T-cell (primary cell): ENCODE measurements at regions of chr2 and their contacts with region 1.

Region 1: DNA sequence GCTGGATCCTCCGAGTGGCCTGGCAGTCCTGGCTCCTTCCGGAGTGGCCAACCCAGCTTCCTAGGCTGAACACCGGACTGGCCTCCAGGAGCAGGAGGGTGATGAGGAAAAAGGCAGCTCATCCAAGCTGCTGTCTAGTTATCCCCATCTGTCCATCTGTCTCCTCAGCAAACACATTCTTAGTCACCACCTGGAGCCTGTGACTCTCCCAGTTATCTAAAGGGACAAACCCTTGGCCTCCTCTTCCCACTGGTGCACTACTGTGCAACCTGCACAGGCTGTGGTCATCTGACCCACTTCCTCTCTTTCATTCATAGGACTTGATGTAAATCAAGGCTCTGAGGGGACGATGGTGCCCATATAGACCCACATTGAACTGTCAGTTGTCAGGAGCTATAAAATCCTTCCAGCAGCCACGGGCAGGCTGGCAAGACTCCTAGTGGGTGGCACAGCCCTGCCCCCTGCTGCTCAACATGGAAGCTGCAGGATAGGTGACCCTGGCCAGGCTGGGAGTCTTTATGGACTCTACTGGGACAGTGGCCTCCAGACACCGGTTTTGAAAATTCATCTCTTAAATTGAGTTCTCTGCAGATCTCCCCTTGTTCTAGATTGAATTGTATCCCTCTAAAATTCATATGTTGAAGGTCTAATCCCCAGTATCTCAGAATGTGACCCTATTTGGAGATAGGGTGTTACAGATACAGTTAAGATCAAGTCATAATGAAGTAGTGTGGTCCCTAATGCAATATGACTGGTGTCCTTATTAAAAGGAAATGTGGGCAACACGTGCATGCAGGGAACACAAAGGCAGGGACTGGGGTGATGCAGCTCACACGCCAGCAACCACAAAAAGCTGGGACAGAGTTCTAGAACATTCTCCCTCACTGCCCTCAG is 29.3 kb upstream of the DUSP2 start:
- DNase-seq: peak; percentile 59 to 89 (median 80)
- ATAC-seq: peak; percentile 94 to 98 (median 97)
- H3K4me3 ChIP-seq: no peak overlapping the region
- H3K4me3 Mint-ChIP-seq: no peak overlapping the region
- H3K27ac ChIP-seq: no peak overlapping the region
- H3K27ac Mint-ChIP-seq: peak overlapping the region; percentile 65 to 73
- H3K4me1 ChIP-seq: peaks cover 3 to 8% of the 10 kb centered on the region in 2 experiments
- H3K4me1 Mint-ChIP-seq: peaks cover 6 to 11% (median 9%) of the 10 kb centered on the region in 3 donors
- H3K27me3 ChIP-seq: peaks cover 0 to 3% of the 10 kb centered on the region in 2 experiments
- H3K27me3 Mint-ChIP-seq: no peaks in the 10 kb centered on the region

Region 2: DNA sequence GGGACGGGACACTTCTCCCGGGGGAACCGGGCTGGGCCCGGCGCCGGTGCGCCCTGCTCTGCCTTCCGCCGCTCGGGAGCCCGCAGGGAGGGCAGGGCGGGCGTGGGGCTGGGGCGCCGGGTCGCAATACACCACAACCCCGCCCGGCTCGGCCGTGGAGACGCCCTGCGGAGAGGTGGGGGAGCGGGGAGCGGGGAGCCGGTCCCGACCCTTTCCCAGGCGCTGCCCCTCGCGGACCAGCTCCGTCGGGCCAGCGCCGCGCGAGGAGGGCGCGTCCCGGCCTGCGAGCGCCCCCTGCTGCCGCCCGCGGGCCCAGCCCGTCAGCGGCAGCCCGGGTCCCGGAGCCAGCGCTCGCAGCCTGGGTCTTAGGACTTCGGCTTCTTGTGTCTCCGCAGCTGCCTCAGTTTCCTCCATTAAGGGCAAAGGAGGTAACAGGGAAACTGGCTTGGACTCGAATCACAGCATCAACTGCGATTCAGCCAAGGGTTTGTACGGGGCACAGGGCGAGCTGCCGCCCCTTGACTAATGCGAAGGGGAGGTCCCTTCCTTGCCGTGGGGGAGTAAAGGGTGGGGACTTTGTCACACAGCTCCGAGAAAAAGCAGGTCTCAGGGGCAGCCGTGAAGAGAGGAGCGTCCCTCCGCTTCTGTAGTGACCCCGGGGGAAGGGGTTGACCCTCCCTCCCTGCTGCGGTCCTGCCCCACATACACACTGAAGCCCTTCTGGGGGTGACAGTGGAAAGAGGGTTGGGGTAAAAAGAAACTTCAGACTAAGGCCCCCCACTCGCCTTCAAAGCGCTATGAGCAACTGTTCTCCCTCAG is 57.4 kb before region 1 on chr2:
- CTCF ChIA-PET with region 1: interaction called, 3 to 11 read pairs
- POLR2A ChIA-PET with region 1: no interaction called
- DNase-seq: peak in 33 of 35 experiments; percentile 19 to 83 (median 46)
- ATAC-seq: peak; percentile 77 to 85 (median 82)
- H3K4me3 ChIP-seq: peak overlapping the region; percentile 15 to 49
- H3K4me3 Mint-ChIP-seq: peak overlapping the region; percentile 44 to 75 (median 57)
- H3K27ac ChIP-seq: no peak overlapping the region
- H3K27ac Mint-ChIP-seq: no peak overlapping the region
- H3K4me1 ChIP-seq: peaks cover 3 to 15% of the 10 kb centered on the region in 2 experiments
- H3K4me1 Mint-ChIP-seq: peaks cover 6 to 23% (median 16%) of the 10 kb centered on the region in 3 donors
- H3K27me3 ChIP-seq: peaks cover 0 to 59% of the 10 kb centered on the region in 2 experiments
- H3K27me3 Mint-ChIP-seq: peaks cover 19 to 39% of the 10 kb centered on the region in 2 donors

Region 3: DNA sequence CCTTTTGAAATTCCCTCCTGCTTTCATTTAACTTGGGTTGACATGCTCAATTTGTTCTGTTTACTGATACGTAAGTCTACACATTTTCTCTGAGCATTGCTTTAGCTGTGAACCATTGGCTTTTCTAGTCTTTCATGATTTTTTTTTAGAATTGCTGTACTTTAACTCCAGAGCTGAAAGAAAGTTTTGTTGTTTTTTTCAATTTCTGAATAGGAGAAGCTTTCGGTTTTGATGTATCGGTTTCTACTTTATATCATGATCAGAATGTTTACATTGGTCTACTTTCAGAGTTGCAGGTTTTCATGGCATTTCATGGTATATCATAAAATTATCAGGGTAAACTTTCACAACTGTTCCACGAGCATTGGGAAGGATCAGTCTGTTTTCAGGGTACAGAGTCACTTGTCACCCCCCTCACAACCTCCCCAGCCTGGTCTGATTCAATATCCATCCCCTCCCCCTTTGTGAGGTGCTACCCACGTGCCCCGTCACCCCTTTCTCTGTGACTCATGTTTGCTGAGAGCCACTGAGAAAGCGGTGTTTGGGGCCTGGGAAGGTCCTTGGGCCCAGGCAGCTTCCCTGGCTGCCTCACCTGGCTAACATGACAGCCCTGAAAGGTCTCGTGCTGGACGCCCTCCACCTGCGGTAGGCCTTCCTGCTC is 43.2 kb before region 1 on chr2:
- CTCF ChIA-PET with region 1: interaction called, 5 to 128 read pairs
- POLR2A ChIA-PET with region 1: no interaction called
- DNase-seq: peak in 2 of 35 experiments; percentile 22 to 48
- ATAC-seq: peak in 1 of 4 experiments; percentile 18
- H3K4me3 ChIP-seq: no peak overlapping the region
- H3K4me3 Mint-ChIP-seq: no peak overlapping the region
- H3K27ac ChIP-seq: peak overlapping the region; percentile 41
- H3K27ac Mint-ChIP-seq: peak overlapping the region; percentile 19 to 71
- H3K4me1 ChIP-seq: peaks cover 0 to 29% of the 10 kb centered on the region in 2 experiments
- H3K4me1 Mint-ChIP-seq: peaks cover 0 to 18% (median 15%) of the 10 kb centered on the region in 3 donors
- H3K27me3 ChIP-seq: no peaks in the 10 kb centered on the region
- H3K27me3 Mint-ChIP-seq: no peaks in the 10 kb centered on the region

Region 4: GRCh38 chr2:96138179-96139145 is 36.0 kb before region 1 on chr2 and contains the start of gene ASTL:
- CTCF ChIA-PET with region 1: interaction called, 76 to 128 read pairs
- POLR2A ChIA-PET with region 1: interaction called, 11 to 14 read pairs
- DNase-seq: peak; percentile 40 to 83 (median 65)
- ATAC-seq: peak; percentile 48 to 72 (median 69)
- H3K4me3 ChIP-seq: no peak within 1 kb of the TSS
- H3K4me3 Mint-ChIP-seq: peak within 1 kb of the TSS in 1 of 3 donors; percentile 36
- H3K27ac ChIP-seq: peak within 1 kb of the TSS; percentile 23
- H3K27ac Mint-ChIP-seq: peak within 1 kb of the TSS; percentile 52 to 63
- H3K4me1 ChIP-seq: peaks cover 9 to 62% of the 10 kb centered on the region in 2 experiments
- H3K4me1 Mint-ChIP-seq: peaks cover 33% of the 10 kb centered on the region in 3 donors
- H3K27me3 ChIP-seq: peaks cover 0 to 3% of the 10 kb centered on the region in 2 experiments
- H3K27me3 Mint-ChIP-seq: no peaks in the 10 kb centered on the region
- total RNA-seq, gene ASTL: 1.2 to 10.4 (median 1.4) TPM

Region 5: GRCh38 chr2:96145036-96145847 is 29.3 kb before region 1 on chr2 and contains the start of gene DUSP2:
- CTCF ChIA-PET with region 1: interaction called, 76 to 128 read pairs
- POLR2A ChIA-PET with region 1: interaction called in 1 of 2 experiments, 3 read pairs
- DNase-seq: peak; percentile 74 to 93 (median 83)
- ATAC-seq: peak; percentile 46 to 65 (median 63)
- H3K4me3 ChIP-seq: peak within 1 kb of the TSS; percentile 77 to 89
- H3K4me3 Mint-ChIP-seq: peak within 1 kb of the TSS; percentile 90 to 97 (median 92)
- H3K27ac ChIP-seq: peak within 1 kb of the TSS; percentile 95
- H3K27ac Mint-ChIP-seq: peak within 1 kb of the TSS; percentile 97 to 99
- H3K4me1 ChIP-seq: peaks cover 34 to 87% of the 10 kb centered on the region in 2 experiments
- H3K4me1 Mint-ChIP-seq: peaks cover 66 to 77% (median 70%) of the 10 kb centered on the region in 3 donors
- H3K27me3 ChIP-seq: no peaks in the 10 kb centered on the region
- H3K27me3 Mint-ChIP-seq: no peaks in the 10 kb centered on the region
- total RNA-seq, gene DUSP2: 37.2 to 437 (median 54.0) TPM

Region 6: GRCh38 chr2:96344011-96344410 is 169.5 kb after region 1 on chr2:
- CTCF ChIA-PET with region 1: no interaction called
- POLR2A ChIA-PET with region 1: no interaction called
- DNase-seq: peak in 30 of 35 experiments; percentile 20 to 75 (median 48)
- ATAC-seq: peak; percentile 84 to 92 (median 88)
- H3K4me3 ChIP-seq: no peak overlapping the region
- H3K4me3 Mint-ChIP-seq: peak overlapping the region in 1 of 3 donors; percentile 24
- H3K27ac ChIP-seq: peak overlapping the region; percentile 85
- H3K27ac Mint-ChIP-seq: peak overlapping the region; percentile 85 to 93
- H3K4me1 ChIP-seq: peaks cover 0 to 34% of the 10 kb centered on the region in 2 experiments
- H3K4me1 Mint-ChIP-seq: peaks cover 7 to 57% (median 50%) of the 10 kb centered on the region in 3 donors
- H3K27me3 ChIP-seq: no peaks in the 10 kb centered on the region
- H3K27me3 Mint-ChIP-seq: no peaks in the 10 kb centered on the region